ENCODE measurements at regions of chr6 and their contacts with region 1.

Region 1: DNA sequence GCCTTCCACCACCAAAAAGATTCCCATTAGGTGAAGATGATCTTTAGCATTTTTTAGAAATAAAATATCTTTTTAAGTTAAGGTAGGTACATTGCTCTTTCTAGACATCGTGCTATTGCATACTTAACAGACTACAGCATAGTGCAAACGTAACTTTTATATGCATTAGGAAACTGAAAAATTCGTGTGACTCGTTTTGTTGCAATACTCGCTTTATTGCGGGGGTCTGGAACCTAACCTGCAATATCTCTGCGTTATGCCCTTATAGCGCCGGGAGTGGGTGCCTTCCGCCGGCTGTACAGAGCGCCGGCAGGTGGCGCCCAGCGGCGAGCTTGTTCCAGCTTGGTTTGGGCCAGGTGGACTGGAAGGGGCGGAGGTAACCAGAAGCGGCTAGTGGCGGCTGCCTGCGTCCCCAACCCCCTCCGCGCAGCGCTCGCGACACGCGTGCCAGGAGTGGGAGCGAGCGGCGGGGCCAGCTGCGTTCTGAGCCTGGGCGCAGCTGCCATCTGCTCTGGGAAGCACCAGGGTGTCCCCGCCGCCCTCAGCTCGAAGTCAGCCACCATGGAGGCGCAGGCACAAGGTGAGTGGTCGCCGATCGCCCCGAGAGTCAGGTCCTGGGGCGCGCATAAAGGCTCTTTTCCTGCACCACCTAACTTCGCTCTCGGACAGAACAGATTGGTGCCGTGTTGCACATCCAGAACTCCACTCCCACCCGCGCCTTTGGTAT is at the start of gene TPD52L1:
- DNase-seq: peak; percentile 81
- ATAC-seq: peak; percentile 88
- H3K4me3 ChIP-seq: peak within 1 kb of the TSS; percentile 86
- H3K27ac ChIP-seq: no peak within 1 kb of the TSS
- H3K4me1 ChIP-seq: peaks cover 4% of the 10 kb centered on the region; the same call in 1 of the 2 replicates
- H3K27me3 ChIP-seq: no peaks in the 10 kb centered on the region
- CTCF ChIP-seq: peak; percentile 85
- total RNA-seq, gene TPD52L1: 39.4 and 41.4 TPM in 2 replicates

Region 2: GRCh38 chr6:124870611-124871459 is 282.7 kb before region 1 on chr6:
- CTCF ChIA-PET with region 1: no interaction called
- POLR2A ChIA-PET with region 1: no interaction called
- intact Hi-C with region 1: loop called (anchors 1 kb)
- DNase-seq: peak; percentile 48
- ATAC-seq: no peak
- H3K4me3 ChIP-seq: no peak overlapping the region
- H3K27ac ChIP-seq: no peak overlapping the region
- H3K4me1 ChIP-seq: no peaks in the 10 kb centered on the region
- H3K27me3 ChIP-seq: no peaks in the 10 kb centered on the region
- CTCF ChIP-seq: peak; percentile 73

Region 3: GRCh38 chr6:125191916-125192609 is 38.5 kb after region 1 on chr6:
- CTCF ChIA-PET with region 1: interaction called, 3 read pairs
- POLR2A ChIA-PET with region 1: interaction called, 6 read pairs
- intact Hi-C with region 1: loop called (anchors 5 kb)
- DNase-seq: peak; percentile 82
- ATAC-seq: peak; percentile 76
- H3K4me3 ChIP-seq: no peak overlapping the region
- H3K27ac ChIP-seq: no peak overlapping the region
- H3K4me1 ChIP-seq: peaks cover 19% of the 10 kb centered on the region
- H3K27me3 ChIP-seq: no peaks in the 10 kb centered on the region
- CTCF ChIP-seq: peak; percentile 76

Region 4: DNA sequence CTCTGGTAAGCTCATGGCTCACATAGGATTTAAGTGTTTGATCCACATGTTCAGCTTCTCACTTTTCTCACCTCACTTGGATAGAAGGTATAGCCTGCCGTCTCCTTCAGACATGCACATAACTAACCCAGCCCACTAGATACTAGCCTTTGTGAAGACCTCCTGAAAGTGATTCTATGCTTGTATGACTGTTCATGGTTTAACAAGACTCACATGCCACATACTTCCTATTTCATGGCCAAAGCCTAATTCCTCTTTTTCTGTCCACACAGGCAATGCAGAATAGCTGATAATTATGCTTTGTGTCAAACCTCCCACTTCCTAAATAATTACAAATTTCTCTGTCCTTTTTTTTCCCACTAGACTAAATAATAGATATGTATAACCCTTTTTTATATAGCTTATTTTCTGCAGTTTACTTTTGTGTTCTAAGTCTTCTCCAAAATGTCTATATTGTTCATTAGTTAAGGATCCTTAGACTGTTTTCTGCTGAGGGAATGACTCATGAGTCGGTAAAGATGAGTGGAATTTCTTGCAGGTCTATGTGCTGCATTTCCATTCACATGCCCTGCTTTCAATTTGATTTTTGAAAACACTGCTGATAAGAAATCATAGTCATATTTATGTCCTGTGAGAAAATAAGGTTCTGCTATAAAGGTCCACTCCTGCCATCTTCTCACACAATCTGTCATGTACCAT is 105.2 kb after region 1 on chr6:
- CTCF ChIA-PET with region 1: no interaction called
- POLR2A ChIA-PET with region 1: no interaction called
- intact Hi-C with region 1: loop called (anchors 2 kb)
- DNase-seq: peak; percentile 15
- ATAC-seq: peak; percentile 53
- H3K4me3 ChIP-seq: peak overlapping the region; percentile 16; the same call in 1 of the 2 replicates
- H3K27ac ChIP-seq: peak overlapping the region; percentile 79
- H3K4me1 ChIP-seq: peaks cover 26% of the 10 kb centered on the region
- H3K27me3 ChIP-seq: no peaks in the 10 kb centered on the region
- CTCF ChIP-seq: no peak

Region 5: GRCh38 chr6:125301435-125302391 is 148.2 kb after region 1 on chr6 and contains the start of gene HDDC2:
- CTCF ChIA-PET with region 1: no interaction called
- POLR2A ChIA-PET with region 1: no interaction called
- intact Hi-C with region 1: loop called (anchors 1 kb)
- DNase-seq: peak; percentile 55
- ATAC-seq: peak; percentile 87
- H3K4me3 ChIP-seq: peak within 1 kb of the TSS; percentile 70
- H3K27ac ChIP-seq: peak within 1 kb of the TSS; percentile 43
- H3K4me1 ChIP-seq: peaks cover 8% of the 10 kb centered on the region
- H3K27me3 ChIP-seq: no peaks in the 10 kb centered on the region
- CTCF ChIP-seq: no peak
- total RNA-seq, gene HDDC2: 88.6 and 96.8 TPM in 2 replicates